ENCODE measurements at regions of chr12 and their contacts with region 1.

Region 1: DNA sequence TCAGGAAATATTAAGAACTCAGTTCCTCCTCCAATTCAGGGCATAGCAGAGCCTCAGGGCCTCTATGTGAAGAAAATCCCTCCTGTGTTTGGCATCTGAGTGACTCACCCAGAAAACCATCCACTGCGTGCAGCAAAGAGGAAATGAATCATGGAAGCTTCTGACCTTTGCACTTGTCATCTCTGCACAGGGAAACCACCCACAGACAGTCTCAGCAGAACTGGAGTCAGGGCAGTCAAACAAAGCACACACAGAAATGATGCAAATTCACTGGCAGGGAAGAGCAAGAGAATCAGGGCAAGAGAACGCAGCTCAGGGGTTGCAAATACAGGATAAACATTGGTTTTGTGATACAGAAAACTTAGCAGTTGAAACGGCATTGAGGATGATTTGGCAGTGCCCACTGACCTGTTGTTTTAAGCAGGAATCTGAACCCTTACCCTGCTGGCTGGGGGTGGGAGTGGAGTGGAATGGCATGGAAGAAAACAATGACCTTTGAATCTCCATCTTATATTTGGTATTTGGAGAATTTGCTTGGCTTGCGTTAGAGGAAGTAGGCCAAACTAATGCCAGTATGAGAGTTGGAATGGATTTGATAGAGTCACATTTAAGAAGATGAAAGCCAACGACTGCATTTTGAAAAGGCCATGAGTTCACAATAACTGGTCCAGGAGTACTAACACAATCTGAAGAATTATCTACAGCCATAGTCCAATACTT is 53.5 kb downstream of the PHLDA1 start:
- DNase-seq: peak; percentile 98
- ATAC-seq: peak; percentile 91
- H3K4me3 ChIP-seq: no peak overlapping the region
- H3K27ac ChIP-seq: peak overlapping the region; percentile 99
- H3K4me1 ChIP-seq: peaks cover 63% of the 10 kb centered on the region
- H3K27me3 ChIP-seq: no peaks in the 10 kb centered on the region
- CTCF ChIP-seq: no peak

Region 2: GRCh38 chr12:75705749-75706711 is 272.1 kb before region 1 on chr12:
- CTCF ChIA-PET with region 1: no interaction called
- POLR2A ChIA-PET with region 1: no interaction called
- in situ Hi-C with region 1: no loop called
- intact Hi-C with region 1: loop called (anchors 5 kb)
- DNase-seq: no peak
- ATAC-seq: peak; percentile 96
- H3K4me3 ChIP-seq: no peak overlapping the region
- H3K27ac ChIP-seq: peak overlapping the region; percentile 100
- H3K4me1 ChIP-seq: peaks cover 50% of the 10 kb centered on the region
- H3K27me3 ChIP-seq: no peaks in the 10 kb centered on the region
- CTCF ChIP-seq: no peak

Region 3: DNA sequence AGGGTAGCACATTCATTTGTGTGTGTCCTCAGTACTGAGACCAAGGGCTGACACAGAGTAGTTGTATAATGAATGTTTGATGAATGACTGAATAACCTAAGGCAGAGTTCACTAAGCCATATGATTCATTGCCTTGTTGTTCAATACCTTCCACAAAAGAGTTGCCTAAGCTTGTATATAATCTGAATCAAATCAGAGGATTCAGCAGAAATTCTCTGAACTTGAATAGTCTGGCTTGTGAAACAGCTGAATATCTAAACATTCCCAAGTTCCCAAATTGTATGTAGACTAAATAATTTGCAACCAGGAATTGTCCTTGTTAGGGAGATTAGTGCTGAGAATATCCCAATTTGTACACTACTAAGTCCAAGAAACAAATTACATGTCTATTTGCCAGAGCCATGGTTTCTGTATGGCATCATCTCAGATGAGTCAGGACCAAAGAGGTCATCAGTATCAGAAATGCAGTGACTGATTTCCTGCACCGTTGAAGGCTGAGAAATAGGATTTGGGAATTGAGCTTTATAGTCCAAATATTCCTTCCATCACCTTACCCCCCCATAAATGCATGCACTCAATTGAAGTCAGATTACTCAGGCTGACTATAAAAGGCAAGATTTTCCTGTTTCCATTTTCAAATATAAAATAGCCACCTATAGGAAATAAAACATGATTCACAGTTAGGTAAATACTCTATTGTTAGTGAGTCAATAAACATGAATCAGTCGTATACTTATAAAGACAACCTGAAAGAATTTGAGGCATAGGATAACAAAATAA is 115.2 kb before region 1 on chr12:
- CTCF ChIA-PET with region 1: no interaction called
- POLR2A ChIA-PET with region 1: no interaction called
- in situ Hi-C with region 1: no loop called
- intact Hi-C with region 1: loop called (anchors 10 kb)
- DNase-seq: peak; percentile 91
- ATAC-seq: peak; percentile 92
- H3K4me3 ChIP-seq: no peak overlapping the region
- H3K27ac ChIP-seq: peak overlapping the region; percentile 97
- H3K4me1 ChIP-seq: peaks cover 27% of the 10 kb centered on the region
- H3K27me3 ChIP-seq: no peaks in the 10 kb centered on the region
- CTCF ChIP-seq: no peak

Region 4: GRCh38 chr12:75943730-75944096 is 34.4 kb before region 1 on chr12:
- CTCF ChIA-PET with region 1: interaction called, 3 read pairs
- POLR2A ChIA-PET with region 1: interaction called, 10 read pairs
- in situ Hi-C with region 1: no loop called
- intact Hi-C with region 1: no loop called
- DNase-seq: no peak
- ATAC-seq: peak; percentile 65
- H3K4me3 ChIP-seq: no peak overlapping the region
- H3K27ac ChIP-seq: peak overlapping the region; percentile 99
- H3K4me1 ChIP-seq: peaks cover 34% of the 10 kb centered on the region
- H3K27me3 ChIP-seq: no peaks in the 10 kb centered on the region
- CTCF ChIP-seq: no peak